OCI-LY7 (cell line): ENCODE measurements at regions of chr4 and their contacts with region 1.

Region 1: GRCh38 chr4:7101692-7102515 is 34.0 kb upstream of the GRPEL1 start:
- DNase-seq: peak; percentile 68
- H3K4me3 ChIP-seq: peak overlapping the region; percentile 71
- H3K27ac ChIP-seq: no peak overlapping the region
- H3K4me1 ChIP-seq: peaks cover 13% of the 10 kb centered on the region
- CTCF ChIP-seq: peak; percentile 80

Region 2: GRCh38 chr4:6269616-6270511 is 832.0 kb before region 1 on chr4 and contains the start of gene WFS1:
- CTCF ChIA-PET with region 1: no interaction called
- POLR2A ChIA-PET with region 1: no interaction called
- intact Hi-C with region 1: loop called (anchors 10 kb)
- DNase-seq: peak; percentile 98
- H3K4me3 ChIP-seq: peak within 1 kb of the TSS; percentile 82
- H3K27ac ChIP-seq: peak within 1 kb of the TSS; percentile 55
- H3K4me1 ChIP-seq: peaks cover 67% of the 10 kb centered on the region
- CTCF ChIP-seq: no peak
- total RNA-seq, gene WFS1: 4.9 and 6.1 TPM in 2 replicates

Region 3: GRCh38 chr4:7186061-7186461 is 84.2 kb after region 1 on chr4:
- CTCF ChIA-PET with region 1: no interaction called
- POLR2A ChIA-PET with region 1: no interaction called
- intact Hi-C with region 1: loop called (anchors 1 kb)
- DNase-seq: peak; percentile 27
- H3K4me3 ChIP-seq: no peak overlapping the region
- H3K27ac ChIP-seq: no peak overlapping the region
- H3K4me1 ChIP-seq: no peaks in the 10 kb centered on the region
- CTCF ChIP-seq: peak; percentile 52